ENCODE measurements at regions of chr14 and their contacts with region 1.

Region 1: GRCh38 chr14:61150851-61151250 is 130.3 kb downstream of the TMEM30B start:
- DNase-seq: no peak
- H3K4me3 ChIP-seq: no peak overlapping the region
- H3K27ac ChIP-seq: no peak overlapping the region
- H3K4me1 ChIP-seq: no peaks in the 10 kb centered on the region
- H3K27me3 ChIP-seq: no peaks in the 10 kb centered on the region
- CTCF ChIP-seq: no peak
- EP300 ChIP-seq: no peak
- POLR2A ChIP-seq: no peak

Region 2: DNA sequence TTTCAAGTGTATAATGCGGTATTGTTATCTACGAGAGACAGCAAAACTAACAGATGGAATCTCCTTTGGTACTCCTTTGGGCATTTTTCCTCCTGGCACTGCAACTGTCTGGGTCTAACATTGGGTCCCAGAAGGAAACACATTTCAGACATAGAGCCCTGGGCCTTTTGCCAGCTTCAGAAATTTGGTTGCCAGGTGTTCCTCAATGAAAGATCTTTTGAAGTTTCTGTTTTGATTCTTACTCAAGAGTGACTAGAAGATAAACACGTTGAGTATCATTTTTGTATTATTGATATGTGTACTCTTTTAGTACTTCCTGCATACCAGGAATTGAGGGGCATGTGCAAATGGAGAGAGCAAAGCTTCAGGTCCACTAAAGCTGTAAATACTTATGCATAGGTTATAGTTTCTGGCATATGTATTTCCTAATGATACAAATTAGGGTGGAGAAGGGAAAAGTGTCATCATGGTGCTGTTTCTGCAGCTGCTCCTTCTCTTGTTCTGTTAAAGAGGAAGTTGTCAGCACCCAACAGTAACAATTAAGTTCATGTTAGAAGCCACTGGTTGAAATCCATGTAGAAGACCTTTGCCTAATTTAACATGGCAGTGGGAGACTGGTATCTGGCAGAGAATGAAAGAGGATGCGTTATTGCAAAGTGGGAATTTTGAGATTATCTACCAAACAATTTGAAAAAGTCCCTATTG is 116.3 kb before region 1 on chr14:
- intact Hi-C with region 1: no loop called
- DNase-seq: no peak
- H3K4me3 ChIP-seq: no peak overlapping the region
- H3K27ac ChIP-seq: no peak overlapping the region
- H3K4me1 ChIP-seq: no peaks in the 10 kb centered on the region
- H3K27me3 ChIP-seq: no peaks in the 10 kb centered on the region
- CTCF ChIP-seq: no peak
- EP300 ChIP-seq: no peak
- POLR2A ChIP-seq: no peak

Region 3: GRCh38 chr14:61111209-61111665 is 39.6 kb before region 1 on chr14:
- intact Hi-C with region 1: no loop called
- DNase-seq: no peak
- H3K4me3 ChIP-seq: no peak overlapping the region
- H3K27ac ChIP-seq: no peak overlapping the region
- H3K4me1 ChIP-seq: no peaks in the 10 kb centered on the region
- H3K27me3 ChIP-seq: no peaks in the 10 kb centered on the region
- CTCF ChIP-seq: no peak
- EP300 ChIP-seq: no peak
- POLR2A ChIP-seq: no peak

Region 4: DNA sequence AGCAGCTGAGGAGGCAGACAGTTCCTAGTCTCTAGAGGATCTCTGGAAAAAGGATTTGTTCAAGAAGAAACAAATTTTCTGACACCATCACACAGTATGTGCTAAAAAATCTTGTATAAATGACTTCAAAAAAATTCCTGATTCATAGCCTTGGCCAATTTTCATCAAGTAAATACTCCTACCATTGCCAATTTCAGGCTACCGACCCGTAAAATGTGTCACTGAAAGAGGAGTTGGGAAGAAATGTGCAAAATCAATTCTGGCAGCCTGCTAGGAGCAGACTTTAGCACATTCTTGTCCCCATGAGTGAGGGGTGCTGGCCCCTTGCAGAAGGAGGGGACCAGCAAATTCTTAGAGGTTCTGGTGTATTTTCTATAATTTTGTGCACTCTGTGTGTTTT is 20.9 kb after region 1 on chr14:
- intact Hi-C with region 1: loop called in 1 of 4 experiments (anchors 2 kb)
- DNase-seq: no peak
- H3K4me3 ChIP-seq: no peak overlapping the region
- H3K27ac ChIP-seq: no peak overlapping the region
- H3K4me1 ChIP-seq: no peaks in the 10 kb centered on the region
- H3K27me3 ChIP-seq: no peaks in the 10 kb centered on the region
- CTCF ChIP-seq: no peak
- EP300 ChIP-seq: no peak
- POLR2A ChIP-seq: no peak